Naive thymus-derived CD4-positive, alpha-beta T cell (primary cell): ENCODE measurements at regions of chr2 and their contacts with region 1.

Region 1: DNA sequence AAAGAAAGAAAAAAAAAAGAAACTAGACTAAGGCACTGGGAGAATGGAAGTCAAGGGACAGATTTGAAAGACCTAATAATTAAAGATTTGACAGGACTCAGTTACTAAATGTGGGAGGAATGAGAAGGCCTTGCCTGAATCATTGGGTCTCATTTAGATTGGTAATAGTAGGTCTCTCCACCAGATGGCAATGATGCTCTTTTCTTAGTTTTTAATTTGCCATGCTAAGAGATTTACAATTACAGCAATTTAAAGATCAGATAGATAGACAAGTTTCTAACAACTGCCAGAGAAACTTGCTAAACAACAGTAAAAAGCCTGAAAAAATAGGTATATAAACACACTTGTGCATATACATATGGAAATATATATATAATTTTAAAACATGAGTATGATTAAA is 153.0 kb downstream of the TMEM247 start:
- DNase-seq: peak in 2 of 9 donors; percentile 17 to 23
- ATAC-seq: no peak
- H3K4me3 ChIP-seq: no peak overlapping the region
- H3K4me3 Mint-ChIP-seq: no peak overlapping the region
- H3K27ac ChIP-seq: no peak overlapping the region
- H3K27ac Mint-ChIP-seq: no peak overlapping the region
- H3K4me1 ChIP-seq: peaks cover 0 to 7% of the 10 kb centered on the region in 2 donors
- H3K4me1 Mint-ChIP-seq: peaks cover 8 to 29% (median 10%) of the 10 kb centered on the region in 7 donors
- H3K27me3 ChIP-seq: no peaks in the 10 kb centered on the region
- H3K27me3 Mint-ChIP-seq: no peaks in the 10 kb centered on the region

Region 2: DNA sequence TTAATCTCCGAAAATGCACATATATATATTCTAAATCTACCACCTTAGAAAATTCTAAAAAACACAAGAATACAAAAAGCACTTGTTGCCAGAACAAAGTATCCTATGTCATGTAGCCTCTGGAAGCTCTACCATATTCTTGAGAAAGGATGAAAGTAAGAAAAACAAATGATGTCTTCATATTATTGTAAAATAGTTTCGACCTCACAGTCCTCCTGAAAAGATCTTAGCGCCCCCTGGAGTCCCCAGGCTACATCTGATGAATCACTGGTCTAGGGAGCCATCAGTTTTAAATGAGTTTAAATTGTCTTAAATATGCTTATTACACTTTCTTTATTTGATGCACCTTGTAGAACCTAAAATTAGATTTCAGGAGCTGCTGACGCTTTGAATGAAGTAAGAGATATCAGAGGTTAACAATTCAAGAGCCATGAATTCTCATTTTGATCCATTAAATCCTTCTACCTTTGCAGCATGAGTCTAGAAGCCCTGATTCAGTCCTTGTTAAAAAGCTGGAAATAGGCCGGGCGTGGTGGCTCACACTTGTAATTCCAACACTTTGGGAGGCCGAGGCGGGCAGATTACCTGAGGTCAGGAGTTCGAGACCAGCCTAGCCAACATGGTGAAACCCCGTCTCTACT is 144.5 kb after region 1 on chr2:
- CTCF ChIA-PET with region 1: no interaction called
- POLR2A ChIA-PET with region 1: no interaction called
- intact Hi-C with region 1: loop called (anchors 1 kb)
- DNase-seq: peak in 7 of 9 donors; percentile 18 to 44 (median 32)
- ATAC-seq: peak; percentile 47
- H3K4me3 ChIP-seq: no peak overlapping the region
- H3K4me3 Mint-ChIP-seq: no peak overlapping the region
- H3K27ac ChIP-seq: no peak overlapping the region
- H3K27ac Mint-ChIP-seq: no peak overlapping the region
- H3K4me1 ChIP-seq: no peaks in the 10 kb centered on the region
- H3K4me1 Mint-ChIP-seq: peaks cover 0 to 2% (median 0%) of the 10 kb centered on the region in 7 donors
- H3K27me3 ChIP-seq: no peaks in the 10 kb centered on the region
- H3K27me3 Mint-ChIP-seq: peaks cover 0 to 14% (median 8%) of the 10 kb centered on the region in 5 donors

Region 3: DNA sequence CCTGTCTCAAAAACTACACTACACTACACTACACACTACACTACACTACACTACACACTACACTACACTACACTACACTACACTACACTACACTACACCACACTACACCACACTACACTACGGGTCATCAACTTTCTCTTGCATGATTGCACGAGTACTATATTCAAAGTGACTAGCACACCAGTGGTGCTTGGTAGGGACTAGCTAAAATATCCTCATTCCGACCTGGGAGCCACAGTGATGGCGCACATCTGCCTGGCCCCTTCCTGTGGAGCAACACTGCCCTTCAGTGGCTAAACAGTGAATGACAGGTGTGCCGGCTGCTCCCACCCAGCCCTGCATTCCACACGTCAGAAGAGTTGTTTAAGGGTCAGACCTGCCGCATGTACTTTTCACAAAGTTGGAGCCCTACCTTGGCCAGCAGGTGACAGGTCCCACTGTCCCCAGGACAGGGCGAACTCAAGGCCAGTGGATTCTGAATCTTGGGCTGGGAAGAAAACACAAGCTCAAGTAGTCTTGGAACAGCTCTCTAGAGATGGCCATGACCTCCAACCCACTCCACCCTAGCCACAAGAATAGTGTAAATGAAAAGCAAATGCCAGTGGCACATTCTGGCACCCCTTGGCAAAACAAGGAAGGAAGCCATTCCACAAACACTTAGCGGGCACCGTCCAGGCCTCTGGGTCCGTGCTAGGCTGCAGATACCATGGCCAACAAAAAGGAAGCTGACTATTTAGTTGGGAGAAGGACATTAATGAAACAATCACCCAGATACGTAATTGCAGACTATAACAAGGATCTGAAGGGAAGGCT is 690.9 kb after region 1 on chr2:
- CTCF ChIA-PET with region 1: no interaction called
- POLR2A ChIA-PET with region 1: no interaction called
- intact Hi-C with region 1: loop called in 1 of 2 experiments (anchors 2 kb)
- DNase-seq: peak; percentile 12 to 70 (median 51)
- ATAC-seq: peak; percentile 97
- H3K4me3 ChIP-seq: no peak overlapping the region
- H3K4me3 Mint-ChIP-seq: no peak overlapping the region
- H3K27ac ChIP-seq: no peak overlapping the region
- H3K27ac Mint-ChIP-seq: no peak overlapping the region
- H3K4me1 ChIP-seq: no peaks in the 10 kb centered on the region
- H3K4me1 Mint-ChIP-seq: no peaks in the 10 kb centered on the region
- H3K27me3 ChIP-seq: no peaks in the 10 kb centered on the region
- H3K27me3 Mint-ChIP-seq: peaks cover 0 to 11% (median 0%) of the 10 kb centered on the region in 5 donors